MCF 10A (cell line): ENCODE measurements at regions of chr2 and their contacts with region 1.

Region 1: DNA sequence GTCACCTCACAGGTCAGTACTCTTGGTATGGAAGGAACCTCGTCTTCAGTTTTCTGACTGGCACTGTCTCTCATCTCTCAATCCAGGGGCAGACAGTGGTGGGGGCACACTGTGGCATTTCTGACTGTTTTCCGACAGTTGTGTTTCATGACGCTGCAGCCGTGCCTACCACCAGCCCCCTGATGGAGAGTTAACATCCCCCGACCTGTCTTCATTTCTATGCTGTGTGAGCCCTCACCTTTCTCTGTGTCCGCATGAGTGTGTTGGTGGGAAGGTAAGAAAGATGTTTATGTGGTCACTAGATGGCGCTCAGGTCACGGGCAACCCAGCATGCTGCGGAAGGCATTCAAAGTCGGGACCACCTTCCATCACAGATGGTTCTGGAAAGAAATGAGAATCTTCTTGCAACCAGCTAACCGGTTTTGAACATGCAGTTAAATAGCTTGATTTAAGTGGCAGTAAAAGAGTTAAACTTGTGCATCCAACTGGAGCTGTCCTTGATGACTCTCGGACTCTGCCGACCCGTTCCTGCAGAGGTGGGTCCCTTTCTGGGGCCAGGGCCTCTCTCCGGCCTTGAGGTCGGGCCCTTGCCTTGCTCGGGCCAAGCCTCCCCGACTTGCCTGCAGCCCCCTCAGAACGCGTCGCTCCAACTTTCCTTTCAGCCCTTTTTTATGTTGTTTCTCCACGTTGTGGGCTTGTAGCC is 92.4 kb downstream of the DYSF start:
- DNase-seq: peak; percentile 63
- H3K4me3 Mint-ChIP-seq: no peak overlapping the region
- H3K27ac Mint-ChIP-seq: no peak overlapping the region
- H3K4me1 Mint-ChIP-seq: peaks cover 5% of the 10 kb centered on the region
- H3K27me3 Mint-ChIP-seq: peaks cover 29% of the 10 kb centered on the region
- CTCF ChIP-seq: peak; percentile 83

Region 2: DNA sequence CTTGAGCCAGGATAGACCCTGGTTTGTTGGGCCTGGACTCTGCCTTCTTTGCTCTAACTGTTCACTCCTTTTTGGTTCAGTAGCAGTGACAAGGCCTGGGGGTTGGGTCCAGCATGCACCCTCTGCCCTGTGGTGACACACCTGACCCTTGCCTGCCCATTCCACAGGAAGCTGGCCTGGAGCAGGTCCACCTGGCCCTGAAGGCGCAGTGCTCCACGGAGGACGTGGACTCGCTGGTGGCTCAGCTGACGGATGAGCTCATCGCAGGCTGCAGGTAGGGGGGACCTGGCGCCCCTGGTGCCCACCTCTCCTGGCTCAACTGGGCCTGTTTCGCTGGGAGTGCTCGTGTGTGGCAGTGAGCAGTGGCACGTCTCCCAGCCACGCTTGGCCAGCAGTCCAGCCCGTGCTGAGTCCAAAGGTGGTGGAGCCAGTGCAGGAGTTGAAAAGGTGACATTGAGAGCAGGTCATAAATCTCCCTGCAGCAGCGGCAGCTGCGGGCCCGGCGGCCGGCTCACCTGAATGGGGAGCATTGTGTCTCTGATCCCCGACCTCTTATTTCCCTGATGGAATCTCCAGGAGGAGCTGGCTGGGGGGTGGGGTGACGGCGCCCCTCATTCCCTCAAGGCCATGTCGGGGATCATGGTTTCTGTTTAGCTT is 10.2 kb after region 1 on chr2:
- CTCF ChIA-PET with region 1: interaction called, 15 read pairs
- POLR2A ChIA-PET with region 1: no interaction called
- intact Hi-C with region 1: no loop called
- DNase-seq: no peak
- H3K4me3 Mint-ChIP-seq: no peak overlapping the region
- H3K27ac Mint-ChIP-seq: no peak overlapping the region
- H3K4me1 Mint-ChIP-seq: no peaks in the 10 kb centered on the region
- H3K27me3 Mint-ChIP-seq: no peaks in the 10 kb centered on the region
- CTCF ChIP-seq: no peak

Region 3: GRCh38 chr2:71614976-71615766 is 69.4 kb after region 1 on chr2:
- CTCF ChIA-PET with region 1: no interaction called
- POLR2A ChIA-PET with region 1: no interaction called
- intact Hi-C with region 1: no loop called
- DNase-seq: no peak
- H3K4me3 Mint-ChIP-seq: no peak overlapping the region
- H3K27ac Mint-ChIP-seq: no peak overlapping the region
- H3K4me1 Mint-ChIP-seq: no peaks in the 10 kb centered on the region
- H3K27me3 Mint-ChIP-seq: peaks cover 11% of the 10 kb centered on the region
- CTCF ChIP-seq: no peak

Region 4: DNA sequence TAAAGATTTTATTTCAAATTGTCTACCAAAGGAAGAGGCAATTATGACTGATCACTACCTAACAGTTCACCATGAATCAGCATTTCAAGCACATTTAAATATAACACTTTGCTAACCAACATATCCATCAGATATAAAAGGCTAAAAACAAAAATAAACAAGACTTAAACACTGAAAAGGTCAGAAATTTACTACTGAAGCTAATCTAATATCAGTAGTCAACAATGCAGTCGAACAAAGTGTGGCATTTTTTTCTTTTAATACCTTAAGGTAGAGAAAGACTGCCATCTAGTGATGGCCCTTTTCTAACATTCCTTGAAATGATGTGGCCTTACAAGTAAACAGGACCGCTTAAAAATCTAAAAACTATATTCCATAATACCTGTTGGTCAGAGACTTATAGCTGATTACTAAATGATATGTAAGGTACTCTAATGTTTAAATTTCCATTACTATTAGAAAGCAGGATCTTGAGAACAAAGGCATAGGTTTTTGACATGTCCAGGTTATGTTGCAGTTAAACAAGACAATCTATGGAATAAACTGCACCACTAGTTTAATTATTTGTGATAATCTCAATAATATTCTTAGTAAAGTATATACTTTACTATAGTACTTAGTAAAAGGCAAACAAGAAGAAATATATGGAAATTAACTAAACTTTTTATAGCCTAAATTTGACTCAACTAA is 1200.1 kb after region 1 on chr2:
- CTCF ChIA-PET with region 1: interaction called, 4 read pairs
- POLR2A ChIA-PET with region 1: no interaction called
- intact Hi-C with region 1: loop called (anchors 5 kb)
- DNase-seq: peak; percentile 72
- H3K4me3 Mint-ChIP-seq: no peak overlapping the region
- H3K27ac Mint-ChIP-seq: no peak overlapping the region
- H3K4me1 Mint-ChIP-seq: no peaks in the 10 kb centered on the region
- H3K27me3 Mint-ChIP-seq: no peaks in the 10 kb centered on the region
- CTCF ChIP-seq: peak; percentile 68